Activated T-helper 2 cell treated with anti-CD3 and anti-CD28 coated beads, Interferon-gamma antibody, Interleukin-2, Interleukin-4, amounts not matched to agents 10 μg/mL and 5 μg/mL and 100 μg/mL, durations not matched to agents 14 hours and 24 hours and 36 hours (primary cell): ENCODE measurements at regions of chr20 and their contacts with region 1.

Region 1: DNA sequence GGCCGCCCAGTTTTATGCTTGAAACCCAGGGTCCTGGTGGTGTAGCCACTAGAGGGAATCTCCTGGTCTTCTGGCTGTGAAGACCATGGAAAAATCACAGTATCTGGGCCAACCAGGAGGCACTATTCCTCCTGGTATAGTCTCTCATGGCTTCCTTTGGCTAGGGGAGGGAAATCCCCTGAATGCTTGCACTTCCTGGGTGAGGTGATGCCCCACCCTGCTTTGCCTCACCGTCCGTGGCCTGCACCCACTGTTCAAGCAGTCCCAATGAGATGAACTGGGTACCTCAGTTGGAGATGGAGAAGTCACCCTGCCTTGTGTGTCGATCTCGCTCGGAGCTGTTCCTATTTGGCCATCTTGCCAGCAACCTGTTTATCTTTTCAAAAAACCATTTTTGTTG is 10.1 kb upstream of the ZNF337 start:
- DNase-seq: no peak
- H3K4me3 Mint-ChIP-seq: no peak overlapping the region
- H3K27ac Mint-ChIP-seq: peak overlapping the region; percentile 27
- H3K4me1 Mint-ChIP-seq: peaks cover 10% of the 10 kb centered on the region
- H3K27me3 Mint-ChIP-seq: peaks cover 10% of the 10 kb centered on the region

Region 2: DNA sequence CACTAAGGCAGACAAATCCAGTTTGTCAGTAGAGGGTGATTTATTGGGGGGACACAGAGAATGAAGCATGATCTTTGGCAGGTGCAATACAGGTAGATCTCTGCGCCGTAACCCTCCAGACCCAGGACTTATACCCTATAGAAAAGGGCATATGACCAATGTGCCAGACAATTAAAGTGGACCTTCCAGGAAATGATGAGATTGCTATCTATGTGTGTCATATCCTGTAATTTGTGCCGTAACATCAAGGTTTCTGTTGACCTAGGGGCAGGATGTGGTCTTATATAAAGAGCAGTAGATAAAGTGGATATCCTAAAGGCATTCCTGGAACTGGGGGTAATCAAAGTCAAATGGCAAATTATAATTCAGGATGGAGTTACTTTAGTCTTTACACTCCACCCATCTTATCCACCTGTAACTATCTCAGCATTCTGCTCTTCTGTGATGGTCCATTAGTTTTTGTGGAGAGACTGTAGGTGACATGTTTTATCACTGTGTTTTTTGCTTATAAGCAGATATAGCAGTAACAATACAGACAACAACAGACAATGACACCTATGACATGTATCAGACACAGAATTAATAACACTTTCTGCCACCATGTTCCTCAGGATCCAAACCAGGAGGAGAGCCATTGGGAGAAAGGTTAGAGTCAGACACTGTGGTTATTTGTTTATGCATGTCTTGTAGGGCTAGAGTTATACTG is 33.0 kb after region 1 on chr20:
- intact Hi-C with region 1: loop called (anchors 2 kb)
- DNase-seq: no peak
- H3K4me3 Mint-ChIP-seq: no peak overlapping the region
- H3K27ac Mint-ChIP-seq: no peak overlapping the region
- H3K4me1 Mint-ChIP-seq: peaks cover 18% of the 10 kb centered on the region
- H3K27me3 Mint-ChIP-seq: no peaks in the 10 kb centered on the region